ENCODE measurements at regions of chrX and their contacts with region 1.

Region 1: DNA sequence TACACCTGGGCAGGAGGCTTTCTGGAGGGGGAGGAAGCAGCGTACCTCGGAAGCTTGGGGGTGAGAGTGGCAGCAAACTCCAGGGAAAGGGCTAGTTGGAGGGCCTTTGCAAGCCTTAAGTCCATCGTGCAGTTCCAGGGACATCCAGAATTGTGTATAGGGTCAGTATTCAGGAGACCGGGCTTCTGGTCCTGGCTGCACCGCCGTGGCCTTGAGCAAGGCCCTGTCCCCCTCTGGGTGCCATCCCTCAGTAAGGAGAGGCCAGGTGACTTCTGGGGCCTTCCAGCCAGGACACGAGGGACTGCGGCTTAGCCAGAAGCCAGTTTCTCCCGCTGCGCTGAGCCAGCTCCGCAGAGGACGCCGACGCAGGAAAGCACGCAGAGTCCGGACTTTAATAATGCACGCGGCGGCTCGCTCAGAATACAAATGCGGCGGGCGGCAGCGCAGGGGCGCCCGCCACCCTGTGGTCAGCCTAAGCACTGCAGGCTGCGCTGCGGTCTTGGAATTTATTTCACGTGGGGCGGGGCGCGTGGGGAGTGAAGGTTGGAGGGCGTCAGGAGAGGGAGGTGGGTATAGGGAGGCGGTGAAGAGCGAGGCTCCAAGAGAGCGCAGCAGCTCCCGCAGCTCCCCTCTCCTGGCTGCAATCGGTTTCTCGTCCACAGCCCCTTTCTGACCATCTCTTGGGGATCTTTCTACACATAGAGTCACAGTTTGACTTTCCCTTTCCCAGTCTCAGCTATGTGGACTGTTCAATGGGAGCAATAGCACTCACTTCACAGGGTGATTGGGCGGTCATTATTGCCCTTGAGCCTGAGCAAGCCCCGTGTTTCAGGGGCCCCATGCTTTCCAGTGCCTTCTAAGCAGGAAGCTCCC is 94.1 kb upstream of the GPR50 start:
- DNase-seq: peak; percentile 79
- H3K4me3 ChIP-seq: no peak overlapping the region
- H3K27ac ChIP-seq: no peak overlapping the region
- H3K4me1 ChIP-seq: no peaks in the 10 kb centered on the region
- H3K27me3 ChIP-seq: no peaks in the 10 kb centered on the region
- CTCF ChIP-seq: peak; percentile 77 to 91 (median 90)
- POLR2A ChIP-seq: no peak

Region 2: DNA sequence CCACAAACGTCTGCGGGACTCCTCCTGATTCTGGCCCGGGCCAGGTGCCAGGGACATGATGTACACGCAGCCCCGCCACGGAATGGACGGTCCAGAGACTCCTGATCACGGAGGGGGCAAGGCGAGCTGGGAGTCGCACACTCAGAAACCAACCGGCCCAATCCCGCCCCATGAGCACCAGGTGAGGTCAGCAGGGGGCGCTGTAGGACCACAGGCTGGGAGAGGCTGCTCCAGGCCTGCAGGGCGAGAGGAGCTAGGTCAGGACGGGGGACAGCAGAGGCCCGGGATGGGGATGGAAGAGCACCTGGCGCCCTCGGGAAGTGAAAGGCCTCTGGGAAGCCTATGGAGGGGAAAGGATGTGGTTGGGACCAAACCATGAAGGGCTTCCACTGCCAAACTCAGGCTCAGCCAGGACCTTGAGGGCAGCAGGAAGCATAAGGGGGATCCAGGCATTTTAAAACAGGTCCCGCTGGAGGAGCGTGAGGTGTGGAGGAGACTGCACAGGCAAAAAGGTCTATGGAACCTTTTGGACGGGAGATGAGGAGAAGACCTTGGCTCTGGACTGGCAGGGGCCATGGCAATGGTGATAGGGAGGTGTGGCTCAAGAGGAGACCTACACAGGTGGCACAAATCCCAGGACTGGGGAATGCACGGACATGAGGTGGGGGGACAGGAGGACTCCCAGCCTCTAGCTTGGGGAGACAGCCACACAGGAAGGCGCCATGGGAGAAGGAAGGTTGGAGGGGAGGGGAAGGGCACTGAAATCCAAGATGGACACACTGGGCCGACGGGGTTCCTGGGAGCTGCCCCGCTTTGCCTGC is 310.0 kb before region 1 on chrX:
- intact Hi-C with region 1: loop called (anchors 5 kb)
- DNase-seq: peak; percentile 83
- H3K4me3 ChIP-seq: no peak overlapping the region
- H3K27ac ChIP-seq: no peak overlapping the region
- H3K4me1 ChIP-seq: no peaks in the 10 kb centered on the region
- H3K27me3 ChIP-seq: no peaks in the 10 kb centered on the region
- CTCF ChIP-seq: peak; percentile 66 to 73 (median 69)
- POLR2A ChIP-seq: no peak